ENCODE measurements at regions of chr2 and their contacts with region 1.

Region 1: GRCh38 chr2:175687465-175687864 is 314.6 kb downstream of the LNPK start:
- DNase-seq: peak in 1 of 2 donors; percentile 3
- H3K4me3 ChIP-seq: no peak overlapping the region
- H3K27ac ChIP-seq: no peak overlapping the region
- H3K4me1 ChIP-seq: no peaks in the 10 kb centered on the region
- H3K27me3 ChIP-seq: peaks cover 0 to 55% (median 3%) of the 10 kb centered on the region in 3 donors
- CTCF ChIP-seq: no peak
- EP300 ChIP-seq: no peak
- POLR2A ChIP-seq: no peak

Region 2: GRCh38 chr2:175304541-175304940 is 382.9 kb before region 1 on chr2:
- intact Hi-C with region 1: no loop called
- DNase-seq: no peak
- H3K4me3 ChIP-seq: no peak overlapping the region
- H3K27ac ChIP-seq: no peak overlapping the region
- H3K4me1 ChIP-seq: no peaks in the 10 kb centered on the region
- H3K27me3 ChIP-seq: peaks cover 0 to 5% (median 0%) of the 10 kb centered on the region in 3 donors
- CTCF ChIP-seq: no peak
- EP300 ChIP-seq: no peak
- POLR2A ChIP-seq: no peak

Region 3: DNA sequence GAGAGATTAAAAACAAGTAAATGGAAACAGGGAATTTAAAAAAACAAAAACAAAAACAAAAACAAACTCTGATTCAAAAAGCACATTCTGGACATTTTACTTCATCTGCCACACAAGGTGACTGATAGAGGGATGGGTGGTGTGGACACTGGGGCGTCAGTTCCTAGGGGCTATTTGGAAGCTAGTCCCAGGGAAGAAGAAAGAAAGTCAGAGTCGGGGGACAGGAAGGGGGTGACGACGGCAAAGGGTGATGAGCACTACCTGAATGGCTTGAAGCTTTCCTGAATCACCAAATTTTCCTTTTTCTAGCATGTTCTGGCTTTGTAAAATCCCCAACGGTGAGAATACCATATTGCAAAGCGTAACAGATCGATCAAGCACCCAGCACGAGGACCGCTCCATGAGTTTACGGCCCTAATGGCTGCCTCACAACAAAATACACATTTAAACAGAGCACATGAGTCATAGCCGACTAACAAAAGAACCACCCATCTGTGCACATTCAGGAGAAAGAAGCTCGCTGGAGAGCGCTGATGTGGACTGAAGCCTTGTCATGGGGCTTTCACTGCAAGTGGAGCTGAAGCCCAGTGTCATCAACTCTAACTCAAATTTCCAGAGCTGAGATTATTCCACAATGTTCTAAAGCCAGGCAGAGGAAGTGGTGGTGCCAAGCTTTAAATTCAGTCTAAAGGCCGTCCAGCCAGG is 135.7 kb after region 1 on chr2:
- intact Hi-C with region 1: no loop called
- DNase-seq: no peak
- H3K4me3 ChIP-seq: no peak overlapping the region
- H3K27ac ChIP-seq: no peak overlapping the region
- H3K4me1 ChIP-seq: no peaks in the 10 kb centered on the region
- H3K27me3 ChIP-seq: no peaks in the 10 kb centered on the region
- CTCF ChIP-seq: no peak
- EP300 ChIP-seq: no peak
- POLR2A ChIP-seq: no peak

Region 4: GRCh38 chr2:175871331-175872004 is 184.0 kb after region 1 on chr2:
- intact Hi-C with region 1: no loop called
- DNase-seq: no peak
- H3K4me3 ChIP-seq: no peak overlapping the region
- H3K27ac ChIP-seq: no peak overlapping the region
- H3K4me1 ChIP-seq: no peaks in the 10 kb centered on the region
- H3K27me3 ChIP-seq: no peaks in the 10 kb centered on the region
- CTCF ChIP-seq: no peak
- EP300 ChIP-seq: no peak
- POLR2A ChIP-seq: no peak

Region 5: DNA sequence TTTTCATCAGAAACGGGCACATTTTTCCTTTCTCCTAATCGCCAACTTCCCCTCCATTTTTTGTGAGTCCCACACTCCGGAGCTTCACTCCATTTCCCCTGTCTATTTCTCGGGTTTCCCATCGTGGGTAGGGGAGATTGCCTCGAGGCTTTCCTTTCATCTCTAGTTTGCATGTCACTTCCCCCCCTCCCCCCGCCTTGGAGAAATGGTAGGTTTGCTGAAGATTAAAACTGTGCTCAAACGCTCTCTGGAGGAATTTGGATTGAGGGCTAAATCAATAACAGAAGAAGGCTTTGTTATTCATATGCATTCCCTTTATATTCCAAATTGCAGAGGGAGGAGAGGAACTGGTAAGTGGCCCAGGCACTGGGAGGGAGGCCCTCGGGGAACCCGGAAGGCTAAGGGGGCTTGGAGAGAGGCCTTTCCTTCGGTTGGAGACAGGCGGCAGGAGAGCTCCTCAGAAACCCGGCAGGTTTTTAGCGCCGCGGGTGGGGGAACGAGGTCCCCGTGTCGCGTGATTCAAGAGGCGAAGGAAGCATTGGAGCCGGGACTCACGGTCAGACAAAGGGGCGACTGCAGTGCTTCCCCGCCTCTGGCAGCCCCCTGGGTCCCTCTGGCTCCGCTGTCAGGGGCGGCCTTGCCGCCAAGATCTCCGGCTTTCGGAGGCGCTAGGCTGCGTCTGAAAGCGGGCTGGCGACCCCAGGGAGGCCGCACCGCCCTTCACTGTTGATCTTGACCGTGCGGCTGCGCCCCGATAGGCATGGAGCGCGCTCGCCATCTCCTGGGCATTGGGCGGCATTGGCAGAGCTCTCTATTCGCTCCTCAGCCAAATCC is 409.7 kb after region 1 on chr2:
- intact Hi-C with region 1: loop called (anchors 5 kb)
- DNase-seq: peak; percentile 76 to 86
- H3K4me3 ChIP-seq: peak overlapping the region; percentile 38 to 59 (median 46)
- H3K27ac ChIP-seq: no peak overlapping the region
- H3K4me1 ChIP-seq: peaks cover 32 to 65% (median 46%) of the 10 kb centered on the region in 4 donors
- H3K27me3 ChIP-seq: peaks cover 69 to 100% (median 100%) of the 10 kb centered on the region in 3 donors
- CTCF ChIP-seq: peak in 5 of 7 experiments; percentile 52 to 81 (median 78)
- EP300 ChIP-seq: no peak
- POLR2A ChIP-seq: no peak

Measured in stomach (tissue), 19 donors.